ENCODE measurements at regions of chr14 and their contacts with region 1.

Region 1: GRCh38 chr14:69259527-69260189 is at the start of gene GALNT16:
- DNase-seq: peak; percentile 59
- H3K4me3 ChIP-seq: peak within 1 kb of the TSS; percentile 73
- H3K27ac ChIP-seq: no peak within 1 kb of the TSS
- H3K4me1 ChIP-seq: peaks cover 24% of the 10 kb centered on the region
- H3K27me3 ChIP-seq: peaks cover 23% of the 10 kb centered on the region
- total RNA-seq, gene GALNT16: 1.4 and 4.2 TPM in 2 replicates

Region 2: GRCh38 chr14:69363055-69363454 is 103.4 kb after region 1 on chr14:
- in situ Hi-C with region 1: loop called (anchors 10 kb)
- DNase-seq: peak; percentile 76
- H3K4me3 ChIP-seq: no peak overlapping the region
- H3K27ac ChIP-seq: no peak overlapping the region
- H3K4me1 ChIP-seq: no peaks in the 10 kb centered on the region
- H3K27me3 ChIP-seq: no peaks in the 10 kb centered on the region

Measured in GM23248 (cell line).